Activated CD8-positive, alpha-beta T cell treated with anti-CD3 and anti-CD28 coated beads for 36 hours (primary cell): ENCODE measurements at regions of chr6 and their contacts with region 1.

Region 1: DNA sequence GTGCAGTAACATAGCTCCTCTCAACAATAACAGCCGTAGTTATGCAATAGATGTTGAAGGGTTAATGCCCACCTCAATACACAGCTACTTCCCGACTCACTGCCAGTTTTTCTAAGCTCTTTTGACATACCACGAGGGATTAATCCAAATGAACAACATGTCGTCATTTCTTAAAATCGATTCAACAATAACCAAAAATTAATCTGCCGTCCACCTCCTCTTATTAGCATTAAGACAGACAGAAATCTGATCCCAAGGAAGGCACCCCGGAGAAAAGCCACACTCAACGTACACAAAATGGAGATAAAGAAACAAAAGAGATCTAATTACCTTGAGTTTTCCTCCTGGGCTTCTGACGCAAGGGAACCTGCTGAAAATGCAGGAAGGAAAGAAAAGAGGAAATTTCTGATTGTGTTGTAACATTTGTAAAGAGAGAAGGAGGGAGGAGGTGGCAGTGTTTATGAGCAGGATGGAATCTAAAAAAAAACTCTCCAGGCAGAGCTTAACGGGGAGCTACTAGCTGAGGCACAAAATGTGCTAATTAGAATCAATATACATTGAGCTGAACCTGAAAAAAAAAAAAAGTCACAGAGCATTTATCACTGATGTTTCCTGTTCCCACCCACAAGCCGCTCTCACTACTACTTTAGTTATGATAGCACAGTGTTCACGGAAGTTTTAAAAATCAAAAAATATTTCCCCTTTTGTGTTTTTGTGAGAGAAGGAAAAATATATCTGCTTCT is 109.3 kb downstream of the IPCEF1 start:
- DNase-seq: peak; percentile 78
- ATAC-seq: peak; percentile 62
- H3K4me3 Mint-ChIP-seq: peak overlapping the region; percentile 93
- H3K27ac Mint-ChIP-seq: peak overlapping the region; percentile 99
- H3K4me1 Mint-ChIP-seq: peaks cover 71% of the 10 kb centered on the region
- H3K27me3 Mint-ChIP-seq: no peaks in the 10 kb centered on the region
- CTCF ChIP-seq: no peak

Region 2: GRCh38 chr6:153013438-153013837 is 1233.9 kb before region 1 on chr6:
- CTCF ChIA-PET with region 1: no interaction called
- POLR2A ChIA-PET with region 1: no interaction called
- intact Hi-C with region 1: no loop called
- DNase-seq: no peak
- ATAC-seq: no peak
- H3K4me3 Mint-ChIP-seq: no peak overlapping the region
- H3K27ac Mint-ChIP-seq: no peak overlapping the region
- H3K4me1 Mint-ChIP-seq: no peaks in the 10 kb centered on the region
- H3K27me3 Mint-ChIP-seq: peaks cover 22% of the 10 kb centered on the region
- CTCF ChIP-seq: no peak

Region 3: GRCh38 chr6:153602401-153602800 is 644.9 kb before region 1 on chr6:
- CTCF ChIA-PET with region 1: no interaction called
- POLR2A ChIA-PET with region 1: no interaction called
- intact Hi-C with region 1: no loop called
- DNase-seq: no peak
- ATAC-seq: no peak
- H3K4me3 Mint-ChIP-seq: no peak overlapping the region
- H3K27ac Mint-ChIP-seq: no peak overlapping the region
- H3K4me1 Mint-ChIP-seq: no peaks in the 10 kb centered on the region
- H3K27me3 Mint-ChIP-seq: no peaks in the 10 kb centered on the region
- CTCF ChIP-seq: no peak

Region 4: DNA sequence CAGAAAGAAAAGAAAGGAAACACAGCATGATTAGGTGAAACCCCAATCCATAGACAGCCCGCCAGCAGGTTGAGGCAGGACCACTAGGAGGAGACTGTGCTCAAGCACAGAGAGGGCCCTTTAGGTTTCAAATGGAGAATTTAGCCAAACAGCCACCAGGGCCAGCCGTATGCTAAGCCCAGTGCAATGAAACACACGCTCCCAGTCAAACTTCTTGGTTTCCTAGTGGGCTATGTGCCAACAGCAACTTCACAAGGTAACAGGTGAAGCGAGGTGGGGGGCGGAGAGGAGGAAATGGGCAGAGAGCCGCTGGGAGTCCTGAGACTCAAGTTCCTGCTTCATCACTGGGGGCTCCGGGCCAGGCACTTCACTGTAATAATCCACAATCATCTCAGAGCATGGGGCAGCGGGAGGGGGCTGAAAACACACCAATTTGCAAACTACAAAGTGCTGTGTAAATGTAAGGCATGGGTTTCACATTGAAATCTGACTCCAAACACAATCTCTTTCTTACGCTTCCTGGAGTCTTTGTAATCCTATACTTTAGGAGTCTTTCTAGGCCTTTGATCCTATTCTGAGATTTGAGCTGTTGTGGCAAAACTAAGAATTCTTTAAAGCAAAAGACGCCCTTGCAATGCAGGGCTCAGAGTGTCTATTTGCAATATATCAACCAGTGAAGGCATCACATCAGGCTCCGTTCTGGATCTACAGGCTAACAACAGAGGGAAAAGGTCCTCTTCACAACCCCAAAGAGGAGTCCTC is 91.0 kb before region 1 on chr6:
- CTCF ChIA-PET with region 1: interaction called, 5 read pairs
- POLR2A ChIA-PET with region 1: interaction called, 5 read pairs
- intact Hi-C with region 1: loop called (anchors 1 kb)
- DNase-seq: peak; percentile 86
- ATAC-seq: peak; percentile 94
- H3K4me3 Mint-ChIP-seq: peak overlapping the region; percentile 58
- H3K27ac Mint-ChIP-seq: peak overlapping the region; percentile 90
- H3K4me1 Mint-ChIP-seq: peaks cover 47% of the 10 kb centered on the region
- H3K27me3 Mint-ChIP-seq: no peaks in the 10 kb centered on the region
- CTCF ChIP-seq: peak; percentile 91

Region 5: DNA sequence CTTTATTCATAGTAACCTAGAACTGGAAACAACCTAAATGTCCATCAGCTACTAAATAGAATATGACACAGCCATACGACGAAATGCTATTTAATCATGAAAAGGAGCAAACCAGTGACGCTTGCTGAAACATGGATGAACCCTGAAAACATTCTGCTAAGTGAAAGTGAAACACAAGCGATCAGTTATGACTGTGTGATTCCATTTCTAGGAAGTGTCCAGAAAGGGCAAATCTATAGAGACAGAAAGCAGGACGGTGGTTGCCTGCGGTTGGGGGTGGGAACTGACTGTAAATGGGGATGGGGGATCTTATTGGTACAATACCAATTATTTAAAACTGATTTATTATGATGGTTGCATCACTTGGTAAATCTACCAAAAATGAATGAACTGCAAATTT is 17.5 kb before region 1 on chr6:
- CTCF ChIA-PET with region 1: interaction called, 18 read pairs
- POLR2A ChIA-PET with region 1: interaction called, 60 read pairs
- intact Hi-C with region 1: loop called (anchors 2 kb)
- DNase-seq: peak; percentile 83
- ATAC-seq: peak; percentile 70
- H3K4me3 Mint-ChIP-seq: peak overlapping the region; percentile 69
- H3K27ac Mint-ChIP-seq: peak overlapping the region; percentile 89
- H3K4me1 Mint-ChIP-seq: peaks cover 81% of the 10 kb centered on the region
- H3K27me3 Mint-ChIP-seq: no peaks in the 10 kb centered on the region
- CTCF ChIP-seq: no peak

Region 6: DNA sequence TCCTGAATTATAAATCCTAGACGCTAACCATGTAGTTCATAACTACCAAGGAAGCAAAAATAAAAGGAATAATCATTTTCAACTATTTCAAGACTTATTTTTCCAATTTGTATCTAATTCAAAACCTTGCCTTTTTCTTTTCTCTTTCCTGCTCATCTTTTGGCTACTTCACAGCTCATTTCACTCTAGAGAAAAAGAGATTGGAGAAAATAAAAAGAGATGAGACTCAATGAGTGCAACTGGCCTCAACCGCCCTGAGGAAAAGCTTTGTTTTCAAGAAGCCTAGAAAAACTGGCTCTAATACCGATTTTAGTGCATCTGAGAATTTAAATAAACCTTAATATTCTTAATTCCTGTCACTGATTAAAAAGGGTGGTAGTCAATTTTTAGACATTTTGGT is 72.9 kb after region 1 on chr6:
- CTCF ChIA-PET with region 1: no interaction called
- POLR2A ChIA-PET with region 1: no interaction called
- intact Hi-C with region 1: no loop called
- DNase-seq: no peak
- ATAC-seq: no peak
- H3K4me3 Mint-ChIP-seq: no peak overlapping the region
- H3K27ac Mint-ChIP-seq: no peak overlapping the region
- H3K4me1 Mint-ChIP-seq: peaks cover 10% of the 10 kb centered on the region
- H3K27me3 Mint-ChIP-seq: peaks cover 1% of the 10 kb centered on the region
- CTCF ChIP-seq: no peak

Region 7: GRCh38 chr6:154352898-154353585 is 105.8 kb after region 1 on chr6:
- CTCF ChIA-PET with region 1: interaction called, 5 read pairs
- POLR2A ChIA-PET with region 1: interaction called, 3 read pairs
- intact Hi-C with region 1: loop called (anchors 5 kb)
- DNase-seq: peak; percentile 82
- ATAC-seq: peak; percentile 84
- H3K4me3 Mint-ChIP-seq: no peak overlapping the region
- H3K27ac Mint-ChIP-seq: no peak overlapping the region
- H3K4me1 Mint-ChIP-seq: peaks cover 50% of the 10 kb centered on the region
- H3K27me3 Mint-ChIP-seq: peaks cover 8% of the 10 kb centered on the region
- CTCF ChIP-seq: no peak

Region 8: GRCh38 chr6:154428897-154429296 is 181.6 kb after region 1 on chr6:
- CTCF ChIA-PET with region 1: no interaction called
- POLR2A ChIA-PET with region 1: no interaction called
- intact Hi-C with region 1: no loop called
- DNase-seq: no peak
- ATAC-seq: no peak
- H3K4me3 Mint-ChIP-seq: no peak overlapping the region
- H3K27ac Mint-ChIP-seq: no peak overlapping the region
- H3K4me1 Mint-ChIP-seq: no peaks in the 10 kb centered on the region
- H3K27me3 Mint-ChIP-seq: no peaks in the 10 kb centered on the region
- CTCF ChIP-seq: no peak